ENCODE measurements at regions of chr9 and their contacts with region 1.

Region 1: DNA sequence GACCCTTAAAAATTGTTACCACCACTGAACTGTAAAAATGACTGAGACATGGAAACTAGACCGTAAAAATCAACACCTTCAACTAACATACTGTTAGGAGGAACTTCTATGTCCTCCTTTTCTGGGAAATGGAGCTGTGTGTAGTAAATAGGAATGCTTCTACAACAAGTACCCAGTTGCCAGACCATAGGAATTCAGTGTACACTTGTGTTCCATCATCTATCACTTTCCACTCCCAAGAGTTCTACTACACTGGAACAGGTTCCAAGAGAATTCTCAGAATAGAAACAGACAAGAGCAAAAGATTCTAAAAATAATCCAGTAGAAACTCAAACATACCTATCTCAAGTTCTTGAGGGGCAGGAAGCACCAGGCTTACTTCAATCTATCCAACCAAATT is 23.6 kb downstream of the UBAP2 start:
- DNase-seq: no peak
- ATAC-seq: no peak
- H3K4me3 ChIP-seq: no peak overlapping the region
- H3K4me3 Mint-ChIP-seq: no peak overlapping the region
- H3K27ac ChIP-seq: no peak overlapping the region
- H3K27ac Mint-ChIP-seq: no peak overlapping the region
- H3K4me1 ChIP-seq: no peaks in the 10 kb centered on the region
- H3K4me1 Mint-ChIP-seq: peaks cover 18% of the 10 kb centered on the region
- H3K27me3 ChIP-seq: no peaks in the 10 kb centered on the region
- H3K27me3 Mint-ChIP-seq: no peaks in the 10 kb centered on the region
- CTCF ChIP-seq: no peak

Region 2: DNA sequence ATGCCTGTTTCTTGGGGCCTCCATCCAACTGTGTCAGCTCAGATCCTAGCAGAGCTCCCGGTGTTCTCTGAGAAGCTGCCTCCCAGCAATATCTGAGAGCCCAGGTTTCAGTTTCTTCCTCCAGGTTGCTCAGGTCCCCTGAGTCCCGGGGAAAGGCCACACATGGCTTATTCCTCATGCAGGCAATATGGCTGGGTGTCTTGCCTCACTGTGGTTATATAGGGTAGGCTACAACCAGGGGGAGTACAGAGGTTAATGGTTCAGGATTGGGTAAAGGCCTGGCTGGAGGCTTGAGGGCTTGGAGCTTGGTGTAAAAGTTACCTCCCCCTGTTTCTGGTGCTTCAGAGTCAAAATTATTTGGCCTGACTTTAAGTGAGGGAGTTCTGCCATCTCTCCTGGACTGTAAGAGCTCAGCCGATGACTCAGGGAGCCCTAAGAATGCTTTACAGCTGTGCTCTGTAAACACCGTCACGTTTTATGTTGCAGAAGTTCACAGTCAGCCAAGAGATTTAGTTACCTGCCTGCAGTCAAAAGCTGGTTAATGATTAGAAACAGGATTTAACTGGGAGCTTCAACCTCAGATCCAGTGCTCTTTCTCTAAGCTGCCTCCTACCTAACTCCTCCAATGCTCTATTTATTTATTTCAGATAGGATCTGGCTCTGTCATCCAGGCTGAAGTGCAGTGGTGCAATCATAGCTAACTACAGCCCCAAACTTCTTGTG is 48.0 kb after region 1 on chr9:
- CTCF ChIA-PET with region 1: no interaction called
- POLR2A ChIA-PET with region 1: no interaction called
- intact Hi-C with region 1: loop called in 1 of 2 experiments (anchors 5 kb)
- DNase-seq: no peak
- ATAC-seq: no peak
- H3K4me3 ChIP-seq: no peak overlapping the region
- H3K4me3 Mint-ChIP-seq: no peak overlapping the region
- H3K27ac ChIP-seq: no peak overlapping the region
- H3K27ac Mint-ChIP-seq: no peak overlapping the region
- H3K4me1 ChIP-seq: no peaks in the 10 kb centered on the region
- H3K4me1 Mint-ChIP-seq: no peaks in the 10 kb centered on the region
- H3K27me3 ChIP-seq: no peaks in the 10 kb centered on the region
- H3K27me3 Mint-ChIP-seq: no peaks in the 10 kb centered on the region
- CTCF ChIP-seq: no peak

Measured in CD8-positive, alpha-beta T cell (primary cell).